ENCODE measurements at regions of chrX and their contacts with region 1.

Region 1: GRCh38 chrX:12080265-12080664 is 58.0 kb upstream of the FRMPD4 start:
- DNase-seq: peak; percentile 42
- H3K4me3 ChIP-seq: no peak overlapping the region
- H3K27ac ChIP-seq: no peak overlapping the region
- H3K4me1 ChIP-seq: no peaks in the 10 kb centered on the region
- H3K27me3 ChIP-seq: no peaks in the 10 kb centered on the region
- CTCF ChIP-seq: peak; percentile 31 to 45
- POLR2A ChIP-seq: no peak

Region 2: GRCh38 chrX:11944501-11944900 is 135.8 kb before region 1 on chrX:
- CTCF ChIA-PET with region 1: interaction called, 11 read pairs
- POLR2A ChIA-PET with region 1: no interaction called
- dilution Hi-C with region 1: no loop called
- intact Hi-C with region 1: loop called (anchors 10 kb)
- DNase-seq: peak; percentile 15
- H3K4me3 ChIP-seq: no peak overlapping the region
- H3K27ac ChIP-seq: no peak overlapping the region
- H3K4me1 ChIP-seq: peaks cover 3% of the 10 kb centered on the region
- H3K27me3 ChIP-seq: no peaks in the 10 kb centered on the region
- CTCF ChIP-seq: peak; percentile 54 to 63
- POLR2A ChIP-seq: no peak

Region 3: GRCh38 chrX:12447448-12448064 is 367.3 kb after region 1 on chrX:
- CTCF ChIA-PET with region 1: no interaction called
- POLR2A ChIA-PET with region 1: no interaction called
- dilution Hi-C with region 1: no loop called
- intact Hi-C with region 1: loop called (anchors 2 kb)
- DNase-seq: peak; percentile 16
- H3K4me3 ChIP-seq: no peak overlapping the region
- H3K27ac ChIP-seq: no peak overlapping the region
- H3K4me1 ChIP-seq: no peaks in the 10 kb centered on the region
- H3K27me3 ChIP-seq: no peaks in the 10 kb centered on the region
- CTCF ChIP-seq: no peak
- POLR2A ChIP-seq: no peak

Measured in endothelial cell of umbilical vein (primary cell).